HEK293 (cell line): ENCODE measurements at regions of chr10 and their contacts with region 1.

Region 1: DNA sequence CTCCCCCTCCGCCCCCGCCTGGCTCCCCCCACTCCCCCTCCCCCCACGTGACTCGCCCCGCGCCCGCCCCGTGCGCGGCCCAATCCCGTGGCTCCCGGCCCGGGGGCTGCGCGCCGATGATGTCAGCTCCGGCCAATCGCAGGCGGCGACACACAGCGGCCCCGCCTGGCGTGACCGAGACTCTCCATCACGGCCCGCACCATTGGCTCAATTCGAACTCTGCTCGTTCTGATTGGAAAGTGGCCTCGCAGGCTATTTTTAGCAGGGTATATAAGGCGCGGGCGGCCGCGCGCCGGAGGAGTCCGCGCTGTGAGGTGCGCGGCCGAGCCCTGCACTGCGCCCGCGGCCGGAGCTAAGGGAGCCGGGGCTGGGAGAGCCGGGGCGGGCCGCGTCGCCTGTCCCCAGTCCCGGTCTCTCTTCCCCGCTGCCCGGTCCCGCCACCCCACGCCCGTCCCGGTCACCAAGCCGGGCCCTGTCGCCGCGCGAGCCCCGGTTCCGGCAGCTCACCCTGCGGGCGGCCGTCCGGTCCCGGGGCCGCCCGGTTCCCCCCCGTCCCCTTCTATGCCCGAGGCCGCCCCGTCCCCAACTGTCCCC is 345 bp upstream of the KLF6 start:
- H3K4me3 ChIP-seq: peak overlapping the region; percentile 91
- H3K27ac ChIP-seq: peak overlapping the region; percentile 98
- H3K4me1 ChIP-seq: peaks cover 6% of the 10 kb centered on the region; the same call in 1 of the 2 replicates
- CTCF ChIP-seq: no peak

Region 2: GRCh38 chr10:3761021-3761686 is 24.2 kb before region 1 on chr10:
- CTCF ChIA-PET with region 1: interaction called, 3 read pairs
- POLR2A ChIA-PET with region 1: interaction called, 25 read pairs
- H3K4me3 ChIP-seq: no peak overlapping the region
- H3K27ac ChIP-seq: no peak overlapping the region
- H3K4me1 ChIP-seq: no peaks in the 10 kb centered on the region
- CTCF ChIP-seq: no peak

Region 3: DNA sequence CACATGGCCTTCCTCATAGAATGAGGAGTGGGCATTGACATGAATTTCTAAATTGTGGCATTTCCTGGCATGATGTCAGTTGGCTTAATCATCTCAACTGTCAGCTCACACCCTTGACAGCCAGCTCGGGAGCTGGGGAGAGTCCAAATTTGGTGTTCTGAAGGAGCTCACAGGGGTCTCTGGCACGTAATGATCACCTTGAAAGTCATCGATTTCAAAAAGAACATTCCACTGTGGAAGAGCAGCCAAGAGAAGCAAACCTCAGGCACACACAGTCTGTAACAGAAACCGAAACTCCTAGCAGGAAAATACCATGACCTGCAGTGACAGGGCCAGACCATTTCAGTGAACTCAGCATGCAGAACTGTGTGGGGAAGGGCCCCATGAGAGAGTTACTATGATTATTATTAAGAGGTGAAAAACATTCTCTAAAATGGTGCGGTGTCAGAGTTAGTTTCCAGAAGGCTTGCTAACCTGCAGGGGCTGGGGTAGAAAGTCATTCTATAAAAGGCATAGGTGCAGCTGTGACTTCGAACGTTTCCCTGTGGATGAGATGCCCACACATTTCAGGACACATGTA is 26.0 kb after region 1 on chr10:
- CTCF ChIA-PET with region 1: no interaction called
- POLR2A ChIA-PET with region 1: interaction called, 32 read pairs
- H3K4me3 ChIP-seq: no peak overlapping the region
- H3K27ac ChIP-seq: no peak overlapping the region
- H3K4me1 ChIP-seq: peaks cover 2% of the 10 kb centered on the region; the same call in 1 of the 2 replicates
- CTCF ChIP-seq: no peak

Region 4: DNA sequence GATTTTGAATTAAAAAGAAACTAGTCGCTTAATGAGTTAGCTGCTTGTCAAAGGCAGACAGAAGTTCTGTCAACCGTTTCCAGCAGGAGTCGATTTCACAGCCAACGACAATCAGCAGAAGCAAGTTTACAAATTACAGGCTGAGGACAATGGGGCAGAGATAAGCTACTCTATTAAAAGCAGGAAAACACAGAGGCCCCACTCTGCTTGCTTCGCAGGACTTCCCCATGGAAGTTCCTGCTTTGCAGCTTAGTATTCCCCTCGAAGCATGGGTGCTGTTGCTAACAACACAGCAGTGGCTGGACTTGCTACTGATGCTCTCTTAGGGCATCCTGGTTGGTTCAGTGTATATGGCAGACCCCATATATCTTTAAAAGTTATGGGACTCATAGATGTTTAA is 50.4 kb after region 1 on chr10:
- CTCF ChIA-PET with region 1: no interaction called
- POLR2A ChIA-PET with region 1: interaction called, 17 read pairs
- H3K4me3 ChIP-seq: no peak overlapping the region
- H3K27ac ChIP-seq: no peak overlapping the region
- H3K4me1 ChIP-seq: peaks cover 3% of the 10 kb centered on the region; the same call in 1 of the 2 replicates
- CTCF ChIP-seq: no peak

Region 5: GRCh38 chr10:3887885-3888476 is 102.6 kb after region 1 on chr10:
- CTCF ChIA-PET with region 1: no interaction called
- POLR2A ChIA-PET with region 1: interaction called, 45 read pairs
- H3K4me3 ChIP-seq: no peak overlapping the region
- H3K27ac ChIP-seq: no peak overlapping the region
- H3K4me1 ChIP-seq: peaks cover 6% of the 10 kb centered on the region
- CTCF ChIP-seq: no peak